Thyroid gland (tissue), 4 donors: ENCODE measurements at regions of chr11 and their contacts with region 1.

Region 1: GRCh38 chr11:67345920-67346799 is 7.2 kb downstream of the POLD4 start:
- DNase-seq: peak; percentile 54 to 58
- H3K4me3 ChIP-seq: no peak overlapping the region
- H3K27ac ChIP-seq: peak overlapping the region in 1 of 3 donors; percentile 3
- H3K4me1 ChIP-seq: peaks cover 7 to 16% of the 10 kb centered on the region in 2 donors
- H3K27me3 ChIP-seq: no peaks in the 10 kb centered on the region
- CTCF ChIP-seq: peak in 5 of 6 experiments; percentile 35 to 67 (median 65)
- POLR2A ChIP-seq: no peak

Region 2: GRCh38 chr11:67303835-67304411 is 42.2 kb before region 1 on chr11:
- intact Hi-C with region 1: no loop called
- DNase-seq: peak; percentile 58 to 68
- H3K4me3 ChIP-seq: peak overlapping the region; percentile 88 to 92 (median 89)
- H3K27ac ChIP-seq: peak overlapping the region; percentile 70 to 87 (median 76)
- H3K4me1 ChIP-seq: peaks cover 10 to 24% of the 10 kb centered on the region in 2 donors
- H3K27me3 ChIP-seq: no peaks in the 10 kb centered on the region
- CTCF ChIP-seq: no peak
- POLR2A ChIP-seq: no peak

Region 3: GRCh38 chr11:67382276-67383136 is 36.3 kb after region 1 on chr11:
- intact Hi-C with region 1: loop called (anchors 5 kb)
- DNase-seq: peak; percentile 78 to 83
- H3K4me3 ChIP-seq: no peak overlapping the region
- H3K27ac ChIP-seq: no peak overlapping the region
- H3K4me1 ChIP-seq: peaks cover 18 to 51% of the 10 kb centered on the region in 2 donors
- H3K27me3 ChIP-seq: no peaks in the 10 kb centered on the region
- CTCF ChIP-seq: peak; percentile 95 to 98 (median 97)
- POLR2A ChIP-seq: no peak